Heart left ventricle (tissue), 16 donors: ENCODE measurements at regions of chrX and their contacts with region 1.

Region 1: GRCh38 chrX:73855546-73855945 is 292.5 kb downstream of the CHIC1 start:
- DNase-seq: peak; percentile 34 to 57 (median 51)
- ATAC-seq: peak in 3 of 4 donors; percentile 20 to 69 (median 30)
- H3K4me3 ChIP-seq: no peak overlapping the region
- H3K27ac ChIP-seq: no peak overlapping the region
- H3K4me1 ChIP-seq: no peaks in the 10 kb centered on the region
- H3K27me3 ChIP-seq: no peaks in the 10 kb centered on the region
- CTCF ChIP-seq: peak; percentile 47 to 82 (median 65)
- POLR2A ChIP-seq: no peak

Region 2: DNA sequence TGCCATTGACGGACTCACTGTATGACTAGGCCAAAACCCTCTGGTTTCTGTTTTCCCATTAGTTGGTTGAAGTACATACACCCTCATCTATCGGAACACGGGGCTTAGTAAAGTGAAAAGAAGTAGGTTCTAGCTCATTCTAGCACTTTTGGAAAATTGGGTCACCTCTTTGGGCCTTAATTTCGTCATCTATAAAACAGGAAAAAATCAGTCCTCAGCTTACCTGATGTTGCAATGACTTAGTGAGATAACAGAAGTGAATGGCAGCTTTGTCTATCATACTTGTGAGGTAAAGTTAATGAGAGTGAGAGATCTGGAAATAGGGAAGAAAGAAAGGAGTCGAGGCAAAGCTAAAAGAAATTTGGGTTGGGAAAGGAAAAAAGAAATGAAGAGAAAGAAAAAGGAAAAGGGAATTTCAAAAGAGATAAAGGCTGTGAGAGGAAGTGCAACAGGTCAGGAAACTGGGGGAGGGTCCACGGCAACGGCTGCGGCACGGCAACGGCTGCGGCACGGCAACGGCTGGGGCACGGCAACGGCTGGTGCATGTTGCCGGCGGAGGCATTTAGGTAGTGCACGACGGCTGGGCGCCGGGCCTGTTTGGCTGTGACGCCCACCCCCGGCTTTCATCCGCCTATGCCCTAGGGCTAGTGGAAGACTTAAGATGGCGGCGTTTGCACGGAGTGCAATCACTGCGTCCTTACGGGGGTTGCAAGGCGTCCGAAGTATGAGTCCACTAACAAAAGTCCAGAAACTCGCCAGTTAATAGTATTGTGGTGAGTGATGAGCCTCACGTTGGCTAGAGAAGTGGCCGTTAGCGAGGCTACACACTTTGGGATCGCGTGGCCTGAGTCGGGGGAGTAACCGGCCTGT is 88.4 kb after region 1 on chrX:
- intact Hi-C with region 1: loop called in 2 of 10 experiments (anchors 2 to 10 kb)
- DNase-seq: peak; percentile 81 to 91 (median 90)
- ATAC-seq: peak; percentile 99 to 100 (median 100)
- H3K4me3 ChIP-seq: peak overlapping the region; percentile 69 to 92 (median 78)
- H3K27ac ChIP-seq: peak overlapping the region; percentile 61 to 88 (median 82)
- H3K4me1 ChIP-seq: peaks cover 0 to 28% (median 3%) of the 10 kb centered on the region in 12 donors
- H3K27me3 ChIP-seq: no peaks in the 10 kb centered on the region
- CTCF ChIP-seq: peak in 1 of 12 donors; percentile 11
- POLR2A ChIP-seq: no peak

Region 3: GRCh38 chrX:74015379-74016019 is 160.0 kb after region 1 on chrX:
- intact Hi-C with region 1: loop called (anchors 1 to 5 kb)
- DNase-seq: peak in 4 of 5 donors; percentile 13 to 60 (median 33)
- ATAC-seq: peak in 3 of 4 donors; percentile 74 to 91 (median 89)
- H3K4me3 ChIP-seq: no peak overlapping the region
- H3K27ac ChIP-seq: no peak overlapping the region
- H3K4me1 ChIP-seq: peaks cover 0 to 4% (median 0%) of the 10 kb centered on the region in 12 donors
- H3K27me3 ChIP-seq: no peaks in the 10 kb centered on the region
- CTCF ChIP-seq: peak; percentile 48 to 90 (median 68)
- POLR2A ChIP-seq: no peak

Region 4: DNA sequence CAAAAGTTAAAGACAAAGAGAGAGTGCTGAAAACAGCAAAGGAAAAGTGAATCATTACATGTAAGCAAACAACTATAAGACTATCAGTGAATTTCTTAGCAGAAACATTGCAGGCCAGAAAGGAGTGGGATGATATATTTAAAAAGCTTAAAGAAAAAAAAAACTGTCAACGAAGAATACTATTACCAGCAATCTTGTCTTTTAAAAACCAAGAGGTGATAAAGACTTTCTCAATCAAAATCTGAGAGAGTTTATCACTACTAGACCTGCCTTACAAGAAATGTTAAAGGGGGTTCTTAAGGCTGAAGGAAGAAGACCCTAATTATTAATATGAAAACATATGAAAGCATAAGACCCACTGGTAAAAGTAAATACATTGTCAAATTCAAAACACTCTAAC is 315.9 kb after region 1 on chrX:
- intact Hi-C with region 1: no loop called
- DNase-seq: no peak
- ATAC-seq: no peak
- H3K4me3 ChIP-seq: no peak overlapping the region
- H3K27ac ChIP-seq: no peak overlapping the region
- H3K4me1 ChIP-seq: no peaks in the 10 kb centered on the region
- H3K27me3 ChIP-seq: no peaks in the 10 kb centered on the region
- CTCF ChIP-seq: no peak
- POLR2A ChIP-seq: no peak

Region 5: DNA sequence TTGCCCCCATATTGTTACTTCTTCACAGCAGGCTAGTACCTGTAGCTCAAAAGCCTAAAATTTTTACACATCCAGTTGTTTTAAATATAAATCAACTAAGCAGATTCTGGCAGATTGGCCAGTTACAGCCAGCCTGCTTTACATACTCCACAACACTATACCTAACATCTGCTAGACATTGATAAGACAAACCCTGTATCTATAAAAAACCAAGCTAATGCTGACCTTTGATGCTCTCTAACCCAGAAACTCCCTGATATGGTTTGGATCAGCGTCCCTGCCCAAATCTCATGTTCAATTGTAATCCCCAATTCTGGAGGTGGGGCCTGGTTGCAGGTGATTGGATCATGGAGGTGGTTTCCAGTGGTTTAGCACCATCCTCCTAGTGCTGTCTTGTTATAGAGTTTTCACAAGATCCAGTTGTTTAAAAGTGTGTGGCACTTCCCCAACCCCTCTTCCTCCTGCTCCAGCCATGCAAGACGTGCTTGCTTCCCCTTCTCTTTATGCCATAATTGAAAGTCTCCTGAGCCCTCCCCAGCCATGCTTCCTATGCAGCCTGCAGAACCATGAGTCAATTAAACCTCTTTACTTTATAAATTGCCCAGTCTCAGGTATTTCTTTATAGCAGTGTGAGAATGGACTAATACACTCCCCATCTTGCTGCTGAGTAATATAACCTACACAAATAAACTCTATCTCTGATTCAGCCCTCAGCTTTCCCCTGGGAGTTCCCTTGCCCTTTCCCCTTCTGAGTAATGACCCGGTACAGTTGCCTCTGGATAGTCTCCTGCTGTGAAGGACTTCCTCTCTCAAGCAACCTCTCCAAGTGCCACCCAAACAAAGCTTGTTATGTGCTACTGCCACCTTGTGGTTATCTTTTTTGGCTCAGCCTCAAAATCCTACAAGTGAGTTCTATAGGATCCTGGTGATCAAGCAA is 488.1 kb after region 1 on chrX:
- intact Hi-C with region 1: loop called in 9 of 10 experiments (anchors 2 to 5 kb)
- DNase-seq: peak in 4 of 5 donors; percentile 28 to 53 (median 44)
- ATAC-seq: peak in 3 of 4 donors; percentile 91 to 94 (median 93)
- H3K4me3 ChIP-seq: no peak overlapping the region
- H3K27ac ChIP-seq: no peak overlapping the region
- H3K4me1 ChIP-seq: peaks cover 0 to 5% (median 0%) of the 10 kb centered on the region in 12 donors
- H3K27me3 ChIP-seq: peaks cover 0 to 4% (median 0%) of the 10 kb centered on the region in 9 donors
- CTCF ChIP-seq: peak; percentile 34 to 68 (median 58)
- POLR2A ChIP-seq: no peak

Region 6: GRCh38 chrX:74438764-74439163 is 583.2 kb after region 1 on chrX:
- intact Hi-C with region 1: no loop called
- DNase-seq: no peak
- ATAC-seq: no peak
- H3K4me3 ChIP-seq: no peak overlapping the region
- H3K27ac ChIP-seq: no peak overlapping the region
- H3K4me1 ChIP-seq: no peaks in the 10 kb centered on the region
- H3K27me3 ChIP-seq: no peaks in the 10 kb centered on the region
- CTCF ChIP-seq: no peak
- POLR2A ChIP-seq: no peak

Region 7: GRCh38 chrX:74536152-74536831 is 680.7 kb after region 1 on chrX:
- intact Hi-C with region 1: loop called in 1 of 10 experiments (anchors 10 kb)
- DNase-seq: peak; percentile 87 to 93 (median 91)
- ATAC-seq: peak; percentile 73 to 93 (median 90)
- H3K4me3 ChIP-seq: peak overlapping the region; percentile 15 to 72 (median 54)
- H3K27ac ChIP-seq: peak overlapping the region; percentile 76 to 96 (median 88)
- H3K4me1 ChIP-seq: peaks cover 0 to 14% (median 1%) of the 10 kb centered on the region in 12 donors
- H3K27me3 ChIP-seq: peaks cover 0 to 9% (median 0%) of the 10 kb centered on the region in 9 donors
- CTCF ChIP-seq: peak; percentile 1 to 53 (median 30)
- POLR2A ChIP-seq: peak in 1 of 2 donors; percentile 41

Region 8: GRCh38 chrX:75603833-75604232 is 1748.3 kb after region 1 on chrX:
- intact Hi-C with region 1: loop called in 1 of 10 experiments (anchors 10 kb)
- DNase-seq: no peak
- ATAC-seq: peak in 1 of 4 donors; percentile 46
- H3K4me3 ChIP-seq: no peak overlapping the region
- H3K27ac ChIP-seq: no peak overlapping the region
- H3K4me1 ChIP-seq: no peaks in the 10 kb centered on the region
- H3K27me3 ChIP-seq: peaks cover 0 to 4% (median 0%) of the 10 kb centered on the region in 9 donors
- CTCF ChIP-seq: peak; percentile 40 to 75 (median 64)
- POLR2A ChIP-seq: no peak